ENCODE measurements at regions of chr5 and their contacts with region 1.

Region 1: GRCh38 chr5:126499853-126500342 is 76.7 kb downstream of the GRAMD2B start:
- DNase-seq: peak in 26 of 35 experiments; percentile 8 to 74 (median 28)
- ATAC-seq: peak; percentile 81 to 84 (median 82)
- H3K4me3 ChIP-seq: no peak overlapping the region
- H3K4me3 Mint-ChIP-seq: peak overlapping the region in 1 of 3 donors; percentile 10
- H3K27ac ChIP-seq: no peak overlapping the region
- H3K27ac Mint-ChIP-seq: peak overlapping the region; percentile 69 to 78
- H3K4me1 ChIP-seq: peaks cover 5 to 9% of the 10 kb centered on the region in 2 experiments
- H3K4me1 Mint-ChIP-seq: peaks cover 12 to 34% (median 26%) of the 10 kb centered on the region in 3 donors
- H3K27me3 ChIP-seq: no peaks in the 10 kb centered on the region
- H3K27me3 Mint-ChIP-seq: no peaks in the 10 kb centered on the region

Region 2: DNA sequence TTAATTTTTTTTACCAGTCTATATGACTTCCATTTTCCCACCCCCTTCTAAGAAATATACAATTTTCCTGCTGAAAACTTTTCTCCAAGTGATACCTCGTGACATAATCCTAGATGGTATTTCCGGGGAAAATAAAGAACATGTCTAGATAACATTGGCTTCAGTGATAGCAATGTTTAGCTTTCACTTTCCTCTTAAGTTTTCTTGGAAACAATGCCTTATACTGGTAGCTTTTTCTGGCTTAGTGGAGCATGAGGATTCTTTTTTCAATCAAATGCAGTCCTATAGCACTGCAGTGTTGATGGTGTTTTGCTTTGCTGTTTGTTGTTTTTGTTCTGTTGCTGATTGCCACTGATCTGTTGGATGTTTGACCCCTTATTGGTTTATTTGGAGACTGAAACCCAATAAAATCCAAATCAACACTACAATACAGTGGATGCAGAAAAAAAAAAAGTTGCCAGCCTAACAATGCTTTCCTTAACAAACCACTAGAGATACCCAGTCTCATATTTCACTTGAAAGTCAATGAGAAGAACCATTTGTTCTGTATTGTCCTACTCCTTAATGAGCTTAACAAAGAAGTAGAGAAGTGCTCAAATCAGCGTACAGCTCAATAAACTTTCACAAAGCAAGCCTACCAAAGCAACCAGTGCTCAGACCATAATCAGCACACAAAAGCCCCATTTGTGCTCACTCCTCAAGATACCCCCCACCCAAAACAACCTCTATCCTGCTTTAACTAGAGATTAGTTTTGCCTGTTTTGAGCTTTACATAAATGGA is 150.9 kb before region 1 on chr5:
- CTCF ChIA-PET with region 1: interaction called, 15 to 24 read pairs
- POLR2A ChIA-PET with region 1: no interaction called
- DNase-seq: no peak
- ATAC-seq: no peak
- H3K4me3 ChIP-seq: no peak overlapping the region
- H3K4me3 Mint-ChIP-seq: no peak overlapping the region
- H3K27ac ChIP-seq: no peak overlapping the region
- H3K27ac Mint-ChIP-seq: no peak overlapping the region
- H3K4me1 ChIP-seq: peaks cover 0 to under 1% of the 10 kb centered on the region in 2 experiments
- H3K4me1 Mint-ChIP-seq: peaks cover 2% of the 10 kb centered on the region in 3 donors
- H3K27me3 ChIP-seq: peaks cover 0 to 4% of the 10 kb centered on the region in 2 experiments
- H3K27me3 Mint-ChIP-seq: peaks cover 22 to 26% of the 10 kb centered on the region in 2 donors

Region 3: GRCh38 chr5:126354012-126354857 is 145.7 kb before region 1 on chr5:
- CTCF ChIA-PET with region 1: interaction called, 15 to 24 read pairs
- POLR2A ChIA-PET with region 1: no interaction called
- DNase-seq: peak in 2 of 35 experiments; percentile 1 to 69
- ATAC-seq: peak in 3 of 4 experiments; percentile 53 to 67 (median 64)
- H3K4me3 ChIP-seq: peak overlapping the region in 1 of 2 donors; percentile 48
- H3K4me3 Mint-ChIP-seq: peak overlapping the region; percentile 22 to 68 (median 41)
- H3K27ac ChIP-seq: no peak overlapping the region
- H3K27ac Mint-ChIP-seq: peak overlapping the region in 1 of 2 donors; percentile 11
- H3K4me1 ChIP-seq: peaks cover 2 to 7% of the 10 kb centered on the region in 2 experiments
- H3K4me1 Mint-ChIP-seq: peaks cover 13 to 18% (median 14%) of the 10 kb centered on the region in 3 donors
- H3K27me3 ChIP-seq: no peaks in the 10 kb centered on the region
- H3K27me3 Mint-ChIP-seq: peaks cover 0 to 2% of the 10 kb centered on the region in 2 donors

Region 4: DNA sequence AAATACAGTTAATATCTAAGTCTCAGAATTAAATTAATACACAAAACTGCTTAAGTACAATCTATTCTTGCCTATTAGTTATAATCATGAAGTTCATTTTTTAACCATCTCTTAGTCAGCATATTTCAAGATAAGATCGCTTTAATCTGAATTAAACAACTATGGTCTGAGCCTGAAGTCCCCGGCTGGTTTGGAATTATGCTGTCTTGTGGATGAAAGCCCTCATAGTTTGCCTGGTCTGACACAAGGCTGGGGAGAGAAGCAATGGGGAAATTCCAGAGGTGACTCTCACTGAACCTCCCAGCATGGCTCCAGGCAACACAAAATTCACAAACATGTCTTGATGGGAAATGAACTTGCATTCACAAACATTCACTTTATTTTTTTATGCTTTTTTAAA is 104.7 kb before region 1 on chr5:
- CTCF ChIA-PET with region 1: no interaction called
- POLR2A ChIA-PET with region 1: no interaction called
- DNase-seq: no peak
- ATAC-seq: no peak
- H3K4me3 ChIP-seq: no peak overlapping the region
- H3K4me3 Mint-ChIP-seq: no peak overlapping the region
- H3K27ac ChIP-seq: no peak overlapping the region
- H3K27ac Mint-ChIP-seq: no peak overlapping the region
- H3K4me1 ChIP-seq: no peaks in the 10 kb centered on the region
- H3K4me1 Mint-ChIP-seq: no peaks in the 10 kb centered on the region
- H3K27me3 ChIP-seq: no peaks in the 10 kb centered on the region
- H3K27me3 Mint-ChIP-seq: peaks cover 0 to 4% of the 10 kb centered on the region in 2 donors

Region 5: DNA sequence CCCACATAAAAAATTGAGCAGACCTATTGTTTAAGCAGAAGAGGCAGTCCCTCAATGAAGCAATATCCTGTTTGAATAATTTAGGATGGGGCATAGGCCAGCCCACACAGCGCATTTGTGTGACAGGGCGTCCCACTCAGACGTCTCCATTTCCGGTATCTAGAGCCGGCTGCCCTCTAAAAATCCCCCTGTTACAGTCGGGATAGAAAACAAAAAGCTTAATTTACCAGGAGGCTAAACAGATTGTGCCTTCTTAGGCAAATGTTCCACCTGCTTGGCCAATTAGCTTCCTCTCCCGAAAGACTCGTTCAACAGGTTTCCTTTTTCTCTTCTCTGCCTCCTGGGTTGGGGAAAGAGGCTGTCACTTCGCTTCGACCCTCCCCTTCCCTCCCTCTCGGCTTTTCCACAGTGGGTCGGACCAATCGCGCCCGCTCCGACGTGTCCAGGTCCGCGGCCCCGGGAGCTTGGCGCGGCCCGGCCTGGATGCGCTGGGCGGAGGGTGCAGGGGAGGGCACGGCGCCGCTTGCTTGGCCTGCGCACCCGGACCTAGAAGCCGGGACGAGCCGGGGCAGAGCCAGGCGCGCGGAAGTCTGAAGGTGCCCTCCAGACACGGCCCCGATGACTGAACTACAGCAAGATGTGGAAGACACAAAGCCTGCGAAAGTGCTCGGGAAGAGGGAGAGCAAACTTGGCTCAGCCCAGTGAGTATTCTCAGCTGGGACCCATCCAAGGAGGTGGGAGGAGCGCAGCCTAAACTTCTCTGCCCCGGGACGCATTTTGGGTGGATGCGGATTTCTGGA is 76.7 kb before region 1 on chr5 and contains the start of gene GRAMD2B:
- CTCF ChIA-PET with region 1: interaction called, 6 to 18 read pairs
- POLR2A ChIA-PET with region 1: interaction called in 1 of 2 experiments, 3 read pairs
- DNase-seq: peak; percentile 36 to 84 (median 70)
- ATAC-seq: peak; percentile 93 to 95 (median 94)
- H3K4me3 ChIP-seq: peak within 1 kb of the TSS; percentile 82 to 94
- H3K4me3 Mint-ChIP-seq: peak within 1 kb of the TSS; percentile 85 to 88 (median 87)
- H3K27ac ChIP-seq: peak within 1 kb of the TSS; percentile 94
- H3K27ac Mint-ChIP-seq: peak within 1 kb of the TSS; percentile 83 to 91
- H3K4me1 ChIP-seq: peaks cover 9 to 11% of the 10 kb centered on the region in 2 experiments
- H3K4me1 Mint-ChIP-seq: peaks cover 33 to 38% (median 35%) of the 10 kb centered on the region in 3 donors
- H3K27me3 ChIP-seq: no peaks in the 10 kb centered on the region
- H3K27me3 Mint-ChIP-seq: no peaks in the 10 kb centered on the region
- total RNA-seq, gene GRAMD2B: 5.7 to 14.1 (median 6.0) TPM

Region 6: GRCh38 chr5:126449751-126450271 is 50.1 kb before region 1 on chr5:
- CTCF ChIA-PET with region 1: interaction called, 3 to 10 read pairs
- POLR2A ChIA-PET with region 1: interaction called, 3 read pairs
- DNase-seq: peak; percentile 20 to 77 (median 48)
- ATAC-seq: peak; percentile 83 to 89 (median 86)
- H3K4me3 ChIP-seq: peak overlapping the region; percentile 46 to 49
- H3K4me3 Mint-ChIP-seq: peak overlapping the region; percentile 77 to 85 (median 85)
- H3K27ac ChIP-seq: peak overlapping the region; percentile 94
- H3K27ac Mint-ChIP-seq: peak overlapping the region; percentile 99 to 100
- H3K4me1 ChIP-seq: peaks cover 31 to 38% of the 10 kb centered on the region in 2 experiments
- H3K4me1 Mint-ChIP-seq: peaks cover 67 to 75% (median 73%) of the 10 kb centered on the region in 3 donors
- H3K27me3 ChIP-seq: no peaks in the 10 kb centered on the region
- H3K27me3 Mint-ChIP-seq: no peaks in the 10 kb centered on the region

Region 7: GRCh38 chr5:126488443-126489065 is 11.3 kb before region 1 on chr5:
- CTCF ChIA-PET with region 1: interaction called, 4 to 10 read pairs
- POLR2A ChIA-PET with region 1: no interaction called
- DNase-seq: no peak
- ATAC-seq: no peak
- H3K4me3 ChIP-seq: no peak overlapping the region
- H3K4me3 Mint-ChIP-seq: no peak overlapping the region
- H3K27ac ChIP-seq: no peak overlapping the region
- H3K27ac Mint-ChIP-seq: no peak overlapping the region
- H3K4me1 ChIP-seq: no peaks in the 10 kb centered on the region
- H3K4me1 Mint-ChIP-seq: no peaks in the 10 kb centered on the region
- H3K27me3 ChIP-seq: no peaks in the 10 kb centered on the region
- H3K27me3 Mint-ChIP-seq: no peaks in the 10 kb centered on the region

Region 8: GRCh38 chr5:126587551-126588390 is 87.9 kb after region 1 on chr5:
- CTCF ChIA-PET with region 1: no interaction called
- POLR2A ChIA-PET with region 1: no interaction called
- DNase-seq: no peak
- ATAC-seq: no peak
- H3K4me3 ChIP-seq: no peak overlapping the region
- H3K4me3 Mint-ChIP-seq: no peak overlapping the region
- H3K27ac ChIP-seq: no peak overlapping the region
- H3K27ac Mint-ChIP-seq: no peak overlapping the region
- H3K4me1 ChIP-seq: no peaks in the 10 kb centered on the region
- H3K4me1 Mint-ChIP-seq: no peaks in the 10 kb centered on the region
- H3K27me3 ChIP-seq: peaks cover 0 to 21% of the 10 kb centered on the region in 2 experiments
- H3K27me3 Mint-ChIP-seq: peaks cover 0 to 11% of the 10 kb centered on the region in 2 donors

Region 9: DNA sequence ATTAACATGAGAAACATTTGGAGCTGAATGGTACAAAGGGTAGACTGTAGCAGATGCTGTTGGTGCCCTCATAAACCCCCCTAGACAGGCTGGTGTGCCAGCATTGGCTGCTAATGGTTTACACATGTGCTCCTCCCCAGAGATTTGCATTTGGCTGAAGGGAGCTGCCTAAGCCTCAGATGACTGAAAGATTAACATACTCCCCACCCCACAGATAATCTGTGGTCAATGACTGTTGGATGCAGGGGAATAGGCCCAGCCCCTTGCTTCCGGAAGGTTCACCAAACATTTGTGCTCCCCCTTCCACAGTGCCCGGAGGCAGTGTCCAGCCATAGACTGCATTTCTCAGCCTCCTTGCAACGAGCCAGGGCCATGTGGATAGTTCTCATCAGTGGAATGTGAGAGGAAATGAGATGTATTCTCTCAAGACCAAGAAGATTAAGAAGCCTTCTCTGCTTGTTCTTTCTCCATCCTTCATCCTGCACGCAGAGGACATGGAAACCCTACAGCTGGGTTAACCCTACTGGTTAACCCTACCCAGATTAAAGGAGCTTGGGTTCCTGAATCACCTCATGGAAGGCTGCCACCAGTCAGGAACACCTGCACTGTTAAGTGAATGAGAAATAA is 180.4 kb after region 1 on chr5:
- CTCF ChIA-PET with region 1: no interaction called
- POLR2A ChIA-PET with region 1: no interaction called
- DNase-seq: peak in 1 of 35 experiments; percentile 4
- ATAC-seq: no peak
- H3K4me3 ChIP-seq: no peak overlapping the region
- H3K4me3 Mint-ChIP-seq: no peak overlapping the region
- H3K27ac ChIP-seq: no peak overlapping the region
- H3K27ac Mint-ChIP-seq: no peak overlapping the region
- H3K4me1 ChIP-seq: peaks cover 0 to 9% of the 10 kb centered on the region in 2 experiments
- H3K4me1 Mint-ChIP-seq: peaks cover 6 to 10% (median 8%) of the 10 kb centered on the region in 3 donors
- H3K27me3 ChIP-seq: peaks cover 0 to 4% of the 10 kb centered on the region in 2 experiments
- H3K27me3 Mint-ChIP-seq: peaks cover 0 to 3% of the 10 kb centered on the region in 2 donors